Head of caudate nucleus (tissue), 42 donors: ENCODE measurements at regions of chr6 and their contacts with region 1.

Region 1: GRCh38 chr6:134446218-134446848 is 128.4 kb upstream of the SGK1 start:
- DNase-seq: peak in 27 of 42 donors; percentile 21 to 79 (median 53)

Region 2: GRCh38 chr6:134502614-134503549 is 56.5 kb after region 1 on chr6:
- intact Hi-C with region 1: loop called (anchors 10 kb)
- DNase-seq: peak in 14 of 42 donors; percentile 24 to 63 (median 39)